Activated T-helper 1 cell treated with anti-CD3 and anti-CD28 coated beads, Interleukin-12 subunit alpha, Interleukin-12 subunit beta, Interleukin-2, Interleukin-4 antibody, amounts not matched to agents 30 ng/mL and 10 ng/mL and 1 ng/mL, durations not matched to agents 14 hours and 24 hours and 36 hours (primary cell): ENCODE measurements at regions of chr3 and their contacts with region 1.

Region 1: DNA sequence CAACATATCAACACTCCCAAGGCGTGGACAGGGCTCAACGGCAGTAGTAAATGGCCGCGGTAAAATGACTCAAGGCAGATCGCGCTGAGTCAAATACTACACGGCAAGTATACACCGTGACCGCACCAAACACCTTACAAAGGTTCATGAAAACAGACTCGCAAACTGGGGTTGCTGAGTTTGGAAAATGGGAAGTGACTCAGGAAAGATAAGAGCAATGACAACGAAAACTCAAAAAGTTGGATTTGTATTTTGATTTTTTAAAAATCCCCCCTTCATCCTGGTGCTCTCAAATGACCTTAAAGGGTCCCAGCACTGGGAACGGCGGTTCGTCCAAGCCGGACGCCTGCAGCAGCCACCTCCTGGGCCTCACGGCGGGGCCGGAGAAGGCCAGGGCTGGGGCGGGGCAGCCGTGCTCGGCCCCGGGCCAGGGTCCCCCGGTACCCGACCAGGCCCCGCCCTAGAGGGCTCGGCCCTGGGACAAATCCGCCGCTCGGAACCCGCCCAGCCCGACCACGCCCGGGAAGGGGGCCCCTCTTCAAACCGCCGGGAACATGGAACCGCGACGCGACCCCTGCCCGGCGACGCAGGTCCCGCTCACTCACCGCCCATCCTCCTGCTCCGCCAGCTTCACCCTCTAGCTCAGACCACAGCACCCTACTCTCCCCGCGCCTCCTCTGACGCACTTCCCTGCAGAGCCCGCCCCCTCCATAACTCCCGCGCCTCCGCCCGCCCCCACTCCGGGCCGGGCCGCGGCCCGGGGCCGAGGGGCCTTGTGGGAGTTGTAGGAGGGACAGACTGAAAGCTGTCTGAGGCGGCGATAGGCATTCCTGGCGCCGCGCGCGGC is at the start of gene CLDND1:
- DNase-seq: peak; percentile 95
- H3K4me3 Mint-ChIP-seq: peak within 1 kb of the TSS; percentile 97
- H3K27ac Mint-ChIP-seq: peak within 1 kb of the TSS; percentile 95
- H3K4me1 Mint-ChIP-seq: peaks cover 77% of the 10 kb centered on the region
- H3K27me3 Mint-ChIP-seq: no peaks in the 10 kb centered on the region
- total RNA-seq, gene CLDND1: 314 and 328 TPM in 2 replicates

Region 2: DNA sequence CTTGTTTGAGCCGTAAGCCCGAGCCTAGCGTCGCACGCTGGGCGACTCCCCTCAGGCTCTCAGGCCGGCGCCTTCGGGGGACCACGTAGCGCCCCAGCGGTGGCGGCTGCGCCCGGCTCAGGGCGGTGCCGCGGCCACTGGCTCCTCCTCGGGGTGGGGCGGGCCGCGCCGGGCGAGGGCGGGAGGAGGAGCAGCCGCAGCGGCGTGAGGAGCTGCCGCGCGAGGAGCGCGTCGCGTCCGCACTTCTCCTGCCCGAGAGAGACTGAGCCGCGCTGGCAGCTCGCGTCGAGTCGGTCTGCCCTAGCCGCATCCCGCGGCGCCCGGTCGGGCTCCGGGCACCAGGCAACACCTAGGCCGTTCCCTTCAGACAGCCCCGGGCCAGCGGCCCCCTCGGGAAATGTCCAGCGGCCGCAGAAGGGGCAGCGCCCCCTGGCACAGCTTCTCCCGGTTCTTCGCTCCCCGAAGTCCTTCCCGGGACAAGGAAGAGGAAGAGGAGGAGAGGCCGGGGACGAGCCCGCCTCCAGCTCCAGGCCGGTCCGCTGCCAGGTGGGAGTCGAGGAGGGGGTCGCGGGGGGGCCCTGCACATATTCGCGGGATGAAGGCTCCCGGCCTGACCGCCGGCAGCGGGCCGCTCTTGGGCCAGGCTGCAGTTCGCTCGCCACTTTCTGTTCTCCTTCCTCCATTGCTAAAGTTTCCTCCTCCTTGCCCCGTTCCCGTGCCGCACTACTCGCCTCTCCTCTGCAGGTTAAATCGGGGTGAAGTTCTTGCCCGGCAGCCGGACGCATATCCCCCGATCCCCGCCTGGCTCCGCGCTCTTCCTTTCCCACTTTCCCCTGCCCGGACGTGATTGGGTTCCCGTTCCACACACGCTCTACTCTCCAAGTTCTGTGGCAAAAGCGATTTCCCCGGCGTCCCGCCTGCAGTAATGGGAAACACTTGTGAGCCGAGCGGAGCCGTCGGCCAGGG is 700.4 kb before region 1 on chr3 and contains the start of gene CRYBG3:
- intact Hi-C with region 1: loop called (anchors 10 kb)
- DNase-seq: peak; percentile 86
- H3K4me3 Mint-ChIP-seq: peak within 1 kb of the TSS; percentile 99
- H3K27ac Mint-ChIP-seq: peak within 1 kb of the TSS; percentile 92
- H3K4me1 Mint-ChIP-seq: peaks cover 40% of the 10 kb centered on the region
- H3K27me3 Mint-ChIP-seq: peaks cover 34% of the 10 kb centered on the region
- total RNA-seq, gene CRYBG3: 6.5 and 6.8 TPM in 2 replicates

Region 3: DNA sequence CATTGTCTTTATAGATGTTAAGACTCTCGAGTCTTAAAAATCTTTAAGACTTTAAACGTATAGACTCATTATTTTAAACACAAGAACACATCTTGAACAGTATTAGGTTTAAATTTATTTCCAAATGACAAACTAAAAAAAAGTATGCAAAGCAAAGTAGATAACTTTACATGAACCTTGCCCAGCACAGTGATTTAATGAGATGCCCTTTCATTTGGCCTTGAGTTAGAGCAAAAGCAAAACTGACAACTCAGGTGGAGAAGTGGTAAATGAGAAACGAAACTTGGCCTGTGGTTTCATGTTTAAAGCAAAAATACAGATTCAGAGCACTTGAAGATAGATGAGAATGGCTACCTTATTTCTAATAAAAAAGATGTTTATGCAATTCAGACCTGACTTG is 17.9 kb after region 1 on chr3:
- intact Hi-C with region 1: loop called (anchors 1 kb)
- DNase-seq: no peak
- H3K4me3 Mint-ChIP-seq: peak overlapping the region; percentile 41
- H3K27ac Mint-ChIP-seq: peak overlapping the region; percentile 76
- H3K4me1 Mint-ChIP-seq: peaks cover 75% of the 10 kb centered on the region
- H3K27me3 Mint-ChIP-seq: no peaks in the 10 kb centered on the region

Region 4: GRCh38 chr3:98563661-98564281 is 41.3 kb after region 1 on chr3:
- intact Hi-C with region 1: loop called (anchors 1 kb)
- DNase-seq: no peak
- H3K4me3 Mint-ChIP-seq: peak overlapping the region; percentile 47
- H3K27ac Mint-ChIP-seq: peak overlapping the region; percentile 53
- H3K4me1 Mint-ChIP-seq: peaks cover 94% of the 10 kb centered on the region
- H3K27me3 Mint-ChIP-seq: no peaks in the 10 kb centered on the region

Region 5: DNA sequence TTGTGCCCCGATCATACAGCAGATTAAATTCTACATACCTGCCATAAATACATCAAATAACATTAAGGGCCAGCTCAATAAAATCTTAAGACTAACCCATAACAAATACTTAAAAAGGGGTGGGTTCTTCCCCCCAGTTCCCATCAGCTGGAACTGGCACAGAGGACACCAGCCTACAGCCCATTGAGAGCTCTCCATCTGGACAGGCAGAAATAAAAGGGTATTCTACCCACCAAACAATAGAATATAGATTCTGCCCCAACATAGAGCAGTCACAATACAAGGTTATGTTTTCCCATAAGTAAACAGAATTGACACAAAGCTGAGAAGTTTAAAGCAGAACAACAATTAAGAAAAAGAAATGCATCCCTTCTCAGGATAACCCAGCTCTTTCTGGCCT is 59.0 kb after region 1 on chr3:
- intact Hi-C with region 1: no loop called
- DNase-seq: no peak
- H3K4me3 Mint-ChIP-seq: no peak overlapping the region
- H3K27ac Mint-ChIP-seq: no peak overlapping the region
- H3K4me1 Mint-ChIP-seq: peaks cover 62% of the 10 kb centered on the region
- H3K27me3 Mint-ChIP-seq: no peaks in the 10 kb centered on the region

Region 6: GRCh38 chr3:98593046-98593936 is 70.8 kb after region 1 on chr3 and contains the start of gene CPOX:
- intact Hi-C with region 1: loop called (anchors 1 kb)
- DNase-seq: peak; percentile 84
- H3K4me3 Mint-ChIP-seq: peak within 1 kb of the TSS; percentile 95
- H3K27ac Mint-ChIP-seq: peak within 1 kb of the TSS; percentile 95
- H3K4me1 Mint-ChIP-seq: peaks cover 63% of the 10 kb centered on the region
- H3K27me3 Mint-ChIP-seq: no peaks in the 10 kb centered on the region
- total RNA-seq, gene CPOX: 42.2 and 47.4 TPM in 2 replicates

Region 7: GRCh38 chr3:98827221-98827920 is 304.9 kb after region 1 on chr3:
- intact Hi-C with region 1: no loop called
- DNase-seq: no peak
- H3K4me3 Mint-ChIP-seq: no peak overlapping the region
- H3K27ac Mint-ChIP-seq: no peak overlapping the region
- H3K4me1 Mint-ChIP-seq: no peaks in the 10 kb centered on the region
- H3K27me3 Mint-ChIP-seq: no peaks in the 10 kb centered on the region

Region 8: GRCh38 chr3:98901392-98902350 is 379.2 kb after region 1 on chr3 and contains the start of gene DCBLD2:
- intact Hi-C with region 1: loop called (anchors 2 kb)
- DNase-seq: peak; percentile 94
- H3K4me3 Mint-ChIP-seq: peak within 1 kb of the TSS; percentile 84
- H3K27ac Mint-ChIP-seq: peak within 1 kb of the TSS; percentile 51
- H3K4me1 Mint-ChIP-seq: peaks cover 12% of the 10 kb centered on the region
- H3K27me3 Mint-ChIP-seq: peaks cover 33% of the 10 kb centered on the region
- total RNA-seq, gene DCBLD2: 1.5 and 2.3 TPM in 2 replicates

Region 9: GRCh38 chr3:100260685-100261484 is 1738.4 kb after region 1 on chr3 and contains the start of gene TBC1D23:
- intact Hi-C with region 1: loop called (anchors 2 kb)
- DNase-seq: peak; percentile 97
- H3K4me3 Mint-ChIP-seq: peak within 1 kb of the TSS; percentile 92
- H3K27ac Mint-ChIP-seq: peak within 1 kb of the TSS; percentile 97
- H3K4me1 Mint-ChIP-seq: peaks cover 38% of the 10 kb centered on the region
- H3K27me3 Mint-ChIP-seq: no peaks in the 10 kb centered on the region
- total RNA-seq, gene TBC1D23: 18.3 and 19.0 TPM in 2 replicates